WTC11 (cell line): ENCODE measurements at regions of chr3 and their contacts with region 1.

Region 1: GRCh38 chr3:135456108-135456790 is 509.3 kb upstream of the PPP2R3A start:
- DNase-seq: peak; percentile 67
- ATAC-seq: peak; percentile 93
- H3K4me3 Mint-ChIP-seq: peak overlapping the region; percentile 8; the same call in 1 of the 2 replicates
- H3K27ac Mint-ChIP-seq: no peak overlapping the region
- H3K4me1 Mint-ChIP-seq: peaks cover 22% of the 10 kb centered on the region
- H3K27me3 Mint-ChIP-seq: peaks cover 7% of the 10 kb centered on the region; the same call in 1 of the 2 replicates
- CTCF ChIP-seq: no peak

Region 2: DNA sequence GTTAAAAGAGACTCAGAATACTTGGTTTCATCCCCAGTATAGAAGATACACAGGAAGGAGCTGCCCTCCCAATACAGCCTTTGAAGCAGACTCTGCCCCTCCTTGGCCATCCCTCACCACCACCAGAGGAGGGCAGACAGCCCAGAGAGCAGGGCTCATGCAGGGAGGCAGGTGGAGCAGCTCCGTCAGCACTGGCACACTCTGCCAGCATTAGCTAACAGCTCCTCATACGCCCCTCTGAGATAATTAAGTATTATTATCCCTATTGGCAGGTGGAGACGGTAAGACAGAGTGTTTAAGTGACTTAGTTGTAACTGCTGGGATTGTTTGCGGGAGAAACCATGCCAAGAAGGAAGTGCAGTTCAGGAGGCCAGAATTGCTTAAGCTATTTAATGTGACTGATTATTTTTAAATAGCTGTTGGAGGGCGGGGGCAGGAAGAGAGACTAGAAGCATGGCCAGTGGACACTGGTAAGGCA is 227.2 kb before region 1 on chr3:
- CTCF ChIA-PET with region 1: interaction called, 13 read pairs
- POLR2A ChIA-PET with region 1: no interaction called
- DNase-seq: peak; percentile 43
- ATAC-seq: peak; percentile 85
- H3K4me3 Mint-ChIP-seq: no peak overlapping the region
- H3K27ac Mint-ChIP-seq: no peak overlapping the region
- H3K4me1 Mint-ChIP-seq: peaks cover 42% of the 10 kb centered on the region
- H3K27me3 Mint-ChIP-seq: peaks cover 6% of the 10 kb centered on the region
- CTCF ChIP-seq: no peak

Region 3: GRCh38 chr3:135240426-135240825 is 215.8 kb before region 1 on chr3:
- CTCF ChIA-PET with region 1: interaction called, 14 read pairs
- POLR2A ChIA-PET with region 1: no interaction called
- DNase-seq: peak; percentile 60
- ATAC-seq: peak; percentile 85
- H3K4me3 Mint-ChIP-seq: no peak overlapping the region
- H3K27ac Mint-ChIP-seq: no peak overlapping the region
- H3K4me1 Mint-ChIP-seq: peaks cover 29% of the 10 kb centered on the region
- H3K27me3 Mint-ChIP-seq: no peaks in the 10 kb centered on the region
- CTCF ChIP-seq: 0 out of 2 replicates have a peak, but pooled peaks have one; percentile 22

Region 4: GRCh38 chr3:135432402-135432801 is 23.8 kb before region 1 on chr3:
- CTCF ChIA-PET with region 1: no interaction called
- POLR2A ChIA-PET with region 1: no interaction called
- DNase-seq: no peak
- ATAC-seq: no peak
- H3K4me3 Mint-ChIP-seq: no peak overlapping the region
- H3K27ac Mint-ChIP-seq: no peak overlapping the region
- H3K4me1 Mint-ChIP-seq: no peaks in the 10 kb centered on the region
- H3K27me3 Mint-ChIP-seq: no peaks in the 10 kb centered on the region
- CTCF ChIP-seq: no peak

Region 5: GRCh38 chr3:135503760-135504686 is 47.8 kb after region 1 on chr3:
- CTCF ChIA-PET with region 1: interaction called, 18 read pairs
- POLR2A ChIA-PET with region 1: no interaction called
- DNase-seq: peak; percentile 92
- ATAC-seq: peak; percentile 98
- H3K4me3 Mint-ChIP-seq: peak overlapping the region; percentile 57
- H3K27ac Mint-ChIP-seq: peak overlapping the region; percentile 63; the same call in 1 of the 2 replicates
- H3K4me1 Mint-ChIP-seq: peaks cover 17% of the 10 kb centered on the region
- H3K27me3 Mint-ChIP-seq: peaks cover 4% of the 10 kb centered on the region; the same call in 1 of the 2 replicates
- CTCF ChIP-seq: peak; percentile 42

Region 6: DNA sequence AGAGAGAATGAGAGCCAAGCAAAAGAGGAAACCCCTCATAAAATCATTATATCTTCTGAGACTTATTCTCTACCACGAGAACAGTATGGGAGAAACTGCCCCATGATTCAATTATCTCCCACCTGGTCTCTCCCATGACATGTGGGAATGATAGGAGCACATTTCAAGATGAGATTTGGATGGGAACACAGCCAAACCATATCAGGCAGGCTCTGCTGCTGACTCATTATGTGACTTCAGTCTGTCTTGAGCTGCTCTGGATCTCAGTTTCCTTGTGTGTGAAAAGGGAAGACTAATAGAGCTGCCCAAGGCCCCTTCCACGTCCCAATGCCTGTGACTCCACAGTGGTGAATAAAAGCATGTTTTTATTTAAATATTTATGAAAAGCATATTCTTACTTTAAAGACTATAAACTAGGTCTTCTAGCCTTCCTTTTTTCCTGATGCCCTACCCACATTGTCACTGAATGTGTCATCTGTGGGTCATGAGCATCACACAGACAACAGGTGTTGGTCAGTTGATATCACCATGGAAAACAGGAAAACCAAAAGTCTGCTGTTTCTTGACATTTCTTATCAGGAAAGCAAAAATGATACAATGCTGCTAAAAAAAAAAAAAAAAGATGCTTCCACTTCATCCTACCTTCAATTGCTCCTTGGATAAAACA is 413.3 kb after region 1 on chr3:
- CTCF ChIA-PET with region 1: no interaction called
- POLR2A ChIA-PET with region 1: no interaction called
- DNase-seq: no peak
- ATAC-seq: no peak
- H3K4me3 Mint-ChIP-seq: no peak overlapping the region
- H3K27ac Mint-ChIP-seq: no peak overlapping the region
- H3K4me1 Mint-ChIP-seq: no peaks in the 10 kb centered on the region
- H3K27me3 Mint-ChIP-seq: peaks cover 2% of the 10 kb centered on the region; the same call in 1 of the 2 replicates
- CTCF ChIP-seq: no peak